ENCODE measurements at regions of chr12 and their contacts with region 1.

Region 1: DNA sequence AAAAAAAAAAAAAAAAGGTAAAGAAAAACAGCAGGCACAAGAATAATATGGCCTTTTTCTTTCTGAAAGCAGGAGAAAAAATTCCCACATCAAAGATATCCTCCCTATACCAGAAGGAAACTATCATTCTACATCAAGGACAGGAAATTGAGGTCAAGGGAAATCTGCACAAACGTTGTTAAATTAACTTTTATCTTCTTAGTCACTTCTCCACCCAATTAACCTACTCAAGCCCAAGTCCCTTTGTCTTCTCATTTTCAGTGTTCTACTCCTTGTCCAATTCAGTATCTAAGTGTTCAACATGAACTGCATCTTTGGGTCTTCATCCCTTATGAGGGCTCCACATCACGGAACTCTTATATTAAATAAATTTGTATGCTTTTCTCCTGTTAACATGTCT is 15.7 kb downstream of the NDUFA12 start:
- DNase-seq: peak in 7 of 9 donors; percentile 58 to 75 (median 73)
- ATAC-seq: peak; percentile 72
- H3K4me3 ChIP-seq: no peak overlapping the region
- H3K4me3 Mint-ChIP-seq: peak overlapping the region; percentile 42 to 90 (median 64)
- H3K27ac ChIP-seq: peak overlapping the region; percentile 52
- H3K27ac Mint-ChIP-seq: peak overlapping the region; percentile 50 to 99 (median 97)
- H3K4me1 ChIP-seq: peaks cover 25 to 61% of the 10 kb centered on the region in 2 donors
- H3K4me1 Mint-ChIP-seq: peaks cover 40 to 95% (median 77%) of the 10 kb centered on the region in 7 donors
- H3K27me3 ChIP-seq: no peaks in the 10 kb centered on the region
- H3K27me3 Mint-ChIP-seq: no peaks in the 10 kb centered on the region

Region 2: GRCh38 chr12:94941440-94941862 is 46.4 kb before region 1 on chr12:
- CTCF ChIA-PET with region 1: no interaction called
- POLR2A ChIA-PET with region 1: no interaction called
- intact Hi-C with region 1: loop called in 1 of 2 experiments (anchors 5 kb)
- DNase-seq: peak in 2 of 9 donors; percentile 9 to 24
- ATAC-seq: peak; percentile 87
- H3K4me3 ChIP-seq: no peak overlapping the region
- H3K4me3 Mint-ChIP-seq: no peak overlapping the region
- H3K27ac ChIP-seq: no peak overlapping the region
- H3K27ac Mint-ChIP-seq: peak overlapping the region in 3 of 9 donors; percentile 7 to 78 (median 33)
- H3K4me1 ChIP-seq: peaks cover 9 to 20% of the 10 kb centered on the region in 2 donors
- H3K4me1 Mint-ChIP-seq: peaks cover 26 to 52% (median 41%) of the 10 kb centered on the region in 7 donors
- H3K27me3 ChIP-seq: no peaks in the 10 kb centered on the region
- H3K27me3 Mint-ChIP-seq: peaks cover 0 to 4% (median 0%) of the 10 kb centered on the region in 5 donors

Region 3: DNA sequence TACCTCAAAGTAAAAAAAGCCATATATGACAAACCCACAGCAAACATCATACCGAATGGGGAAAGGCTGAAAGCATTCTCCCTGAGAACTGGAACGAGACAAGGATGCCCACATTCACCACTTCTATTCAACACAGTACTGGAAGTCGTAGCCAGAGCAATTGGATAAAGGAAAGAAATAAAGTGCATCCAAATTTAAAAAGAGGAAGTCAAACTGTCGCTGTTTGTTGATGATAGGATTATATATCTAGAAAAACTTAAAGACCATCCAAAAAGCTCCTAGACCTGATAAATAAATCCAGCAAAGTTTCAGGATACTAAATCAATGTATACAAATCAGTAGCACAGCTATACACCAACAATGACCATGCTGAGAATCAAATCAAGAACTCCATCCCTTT is 10.5 kb after region 1 on chr12:
- CTCF ChIA-PET with region 1: interaction called, 5 read pairs
- POLR2A ChIA-PET with region 1: interaction called, 52 read pairs
- intact Hi-C with region 1: loop called (anchors 1 kb)
- DNase-seq: no peak
- ATAC-seq: no peak
- H3K4me3 ChIP-seq: no peak overlapping the region
- H3K4me3 Mint-ChIP-seq: peak overlapping the region in 9 of 10 donors; percentile 16 to 83 (median 71)
- H3K27ac ChIP-seq: no peak overlapping the region
- H3K27ac Mint-ChIP-seq: peak overlapping the region in 4 of 9 donors; percentile 36 to 53 (median 48)
- H3K4me1 ChIP-seq: peaks cover 29 to 36% of the 10 kb centered on the region in 2 donors
- H3K4me1 Mint-ChIP-seq: peaks cover 28 to 60% (median 48%) of the 10 kb centered on the region in 7 donors
- H3K27me3 ChIP-seq: no peaks in the 10 kb centered on the region
- H3K27me3 Mint-ChIP-seq: no peaks in the 10 kb centered on the region

Region 4: GRCh38 chr12:95700316-95700785 is 712.5 kb after region 1 on chr12:
- CTCF ChIA-PET with region 1: no interaction called
- POLR2A ChIA-PET with region 1: no interaction called
- intact Hi-C with region 1: no loop called
- DNase-seq: no peak
- ATAC-seq: no peak
- H3K4me3 ChIP-seq: no peak overlapping the region
- H3K4me3 Mint-ChIP-seq: no peak overlapping the region
- H3K27ac ChIP-seq: no peak overlapping the region
- H3K27ac Mint-ChIP-seq: no peak overlapping the region
- H3K4me1 ChIP-seq: no peaks in the 10 kb centered on the region
- H3K4me1 Mint-ChIP-seq: no peaks in the 10 kb centered on the region
- H3K27me3 ChIP-seq: no peaks in the 10 kb centered on the region
- H3K27me3 Mint-ChIP-seq: peaks cover 0 to 31% (median 9%) of the 10 kb centered on the region in 5 donors